Dendritic cell treated with granulocyte-macrophage colony-stimulating factor and Interleukin-4, amounts not matched to agents 40 ng/mL and 50 ng/mL, for 4 days (primary cell): ENCODE measurements at regions of chr6 and their contacts with region 1.

Region 1: DNA sequence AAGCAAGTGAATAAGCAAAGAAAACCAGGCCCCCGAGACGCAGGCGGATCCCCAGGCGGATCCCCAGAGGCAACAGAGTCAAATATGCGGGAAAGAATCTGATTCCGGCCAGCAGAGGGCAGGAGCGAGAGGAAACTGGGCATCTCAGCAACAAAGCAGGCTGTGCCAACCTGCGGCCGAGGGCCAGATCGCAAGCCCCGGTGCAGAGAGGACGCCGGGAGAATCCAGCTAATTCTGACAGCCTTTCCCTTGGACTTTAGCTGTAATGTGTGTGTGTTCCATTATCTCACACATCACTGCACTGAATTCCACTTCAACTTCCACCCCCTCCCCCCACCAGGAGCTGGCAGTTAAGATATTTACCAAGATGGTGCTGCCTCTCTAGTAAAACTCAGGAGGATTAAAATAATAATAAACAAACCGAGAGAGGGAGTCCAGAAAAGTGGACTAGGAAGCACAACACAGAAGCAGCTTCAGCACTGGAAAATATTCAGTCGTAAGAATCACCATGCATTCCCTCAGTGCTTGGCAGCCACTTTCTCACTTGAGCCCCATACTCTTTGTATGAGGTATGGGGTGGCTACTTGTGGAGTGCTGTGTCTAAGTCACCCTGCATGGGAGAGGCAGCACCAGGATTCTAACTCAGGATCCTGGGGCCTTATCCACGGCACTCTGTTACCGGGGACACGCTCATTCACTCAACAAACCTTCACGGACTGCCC is 66.2 kb upstream of the SNX9 start:
- H3K4me3 Mint-ChIP-seq: no peak overlapping the region
- H3K27ac Mint-ChIP-seq: peak overlapping the region; percentile 71
- H3K4me1 Mint-ChIP-seq: peaks cover 52% of the 10 kb centered on the region
- H3K27me3 Mint-ChIP-seq: peaks cover 35% of the 10 kb centered on the region

Region 2: GRCh38 chr6:157789861-157790260 is 33.0 kb after region 1 on chr6:
- intact Hi-C with region 1: no loop called
- H3K4me3 Mint-ChIP-seq: no peak overlapping the region
- H3K27ac Mint-ChIP-seq: no peak overlapping the region
- H3K4me1 Mint-ChIP-seq: peaks cover 15% of the 10 kb centered on the region
- H3K27me3 Mint-ChIP-seq: peaks cover 4% of the 10 kb centered on the region

Region 3: GRCh38 chr6:157873735-157874344 is 117.0 kb after region 1 on chr6:
- intact Hi-C with region 1: loop called (anchors 1 kb)
- H3K4me3 Mint-ChIP-seq: no peak overlapping the region
- H3K27ac Mint-ChIP-seq: no peak overlapping the region
- H3K4me1 Mint-ChIP-seq: no peaks in the 10 kb centered on the region
- H3K27me3 Mint-ChIP-seq: no peaks in the 10 kb centered on the region